ENCODE measurements at regions of chr12 and their contacts with region 1.

Region 1: DNA sequence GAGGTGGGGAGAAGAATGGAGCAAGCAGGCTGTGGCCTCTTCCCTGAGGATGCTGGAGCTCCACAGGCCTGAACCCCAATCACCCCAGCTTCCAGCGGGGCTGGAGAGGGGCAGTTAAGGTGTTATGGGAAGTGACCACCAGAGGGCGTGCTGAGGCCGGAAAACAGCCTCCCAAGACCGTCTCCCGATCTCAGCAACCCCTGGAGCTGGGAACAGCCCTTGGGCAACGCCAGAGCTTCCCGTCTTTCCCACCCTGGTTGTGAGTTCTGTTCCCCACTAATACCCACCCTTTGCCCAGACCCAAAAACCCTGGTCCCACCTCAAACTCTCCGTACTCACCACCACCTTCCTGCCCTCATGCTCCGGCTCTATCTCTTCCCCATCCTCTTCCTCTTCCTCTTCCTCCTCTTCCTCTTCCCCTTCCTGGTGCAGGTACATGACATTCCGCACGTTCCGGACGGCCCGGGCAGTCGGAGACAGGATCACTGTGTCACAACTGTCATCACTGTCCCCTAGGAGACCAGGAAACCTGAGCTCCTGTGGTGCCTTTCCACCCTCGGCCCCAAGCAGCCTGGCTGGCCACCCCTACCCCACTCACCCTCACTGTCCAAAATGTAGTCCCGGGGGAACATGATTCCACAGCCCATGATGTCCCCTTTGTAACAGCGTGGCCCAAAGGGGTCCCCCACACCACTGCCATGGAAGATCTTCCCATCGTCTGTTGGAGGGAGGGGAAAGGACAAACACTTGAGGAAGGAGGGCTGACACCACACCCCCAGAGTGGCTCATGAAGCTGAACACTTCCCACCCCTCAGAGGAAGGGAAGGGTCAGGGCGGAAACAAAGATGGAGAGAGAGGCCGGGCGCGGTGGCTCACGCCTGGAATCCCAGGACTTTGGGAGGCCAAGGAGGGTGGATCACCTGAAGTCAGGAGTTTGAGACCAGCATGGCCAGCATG is 12.9 kb downstream of the SPRYD3 start:
- DNase-seq: peak; percentile 60
- ATAC-seq: peak; percentile 73
- H3K4me3 ChIP-seq: peak overlapping the region in 1 of 2 experiments; percentile 18; a peak in 2 of 4 replicates
- H3K27ac ChIP-seq: peak overlapping the region; percentile 67
- H3K4me1 ChIP-seq: peaks cover 18 to 52% of the 10 kb centered on the region in 2 experiments
- H3K27me3 ChIP-seq: no peaks in the 10 kb centered on the region
- CTCF ChIP-seq: peak; percentile 76 to 82 (median 82)
- POLR2A ChIP-seq: no peak
- RAD21 ChIP-seq: peak; percentile 97

Region 2: GRCh38 chr12:53012928-53013327 is 53.3 kb before region 1 on chr12:
- CTCF ChIA-PET with region 1: no interaction called
- POLR2A ChIA-PET with region 1: no interaction called
- RAD21 ChIA-PET with region 1: no interaction called
- intact Hi-C with region 1: no loop called
- DNase-seq: no peak
- ATAC-seq: no peak
- H3K4me3 ChIP-seq: no peak overlapping the region
- H3K27ac ChIP-seq: no peak overlapping the region
- H3K4me1 ChIP-seq: peaks cover 6 to 24% of the 10 kb centered on the region in 2 experiments
- H3K27me3 ChIP-seq: no peaks in the 10 kb centered on the region
- CTCF ChIP-seq: no peak
- POLR2A ChIP-seq: no peak
- RAD21 ChIP-seq: no peak

Region 3: DNA sequence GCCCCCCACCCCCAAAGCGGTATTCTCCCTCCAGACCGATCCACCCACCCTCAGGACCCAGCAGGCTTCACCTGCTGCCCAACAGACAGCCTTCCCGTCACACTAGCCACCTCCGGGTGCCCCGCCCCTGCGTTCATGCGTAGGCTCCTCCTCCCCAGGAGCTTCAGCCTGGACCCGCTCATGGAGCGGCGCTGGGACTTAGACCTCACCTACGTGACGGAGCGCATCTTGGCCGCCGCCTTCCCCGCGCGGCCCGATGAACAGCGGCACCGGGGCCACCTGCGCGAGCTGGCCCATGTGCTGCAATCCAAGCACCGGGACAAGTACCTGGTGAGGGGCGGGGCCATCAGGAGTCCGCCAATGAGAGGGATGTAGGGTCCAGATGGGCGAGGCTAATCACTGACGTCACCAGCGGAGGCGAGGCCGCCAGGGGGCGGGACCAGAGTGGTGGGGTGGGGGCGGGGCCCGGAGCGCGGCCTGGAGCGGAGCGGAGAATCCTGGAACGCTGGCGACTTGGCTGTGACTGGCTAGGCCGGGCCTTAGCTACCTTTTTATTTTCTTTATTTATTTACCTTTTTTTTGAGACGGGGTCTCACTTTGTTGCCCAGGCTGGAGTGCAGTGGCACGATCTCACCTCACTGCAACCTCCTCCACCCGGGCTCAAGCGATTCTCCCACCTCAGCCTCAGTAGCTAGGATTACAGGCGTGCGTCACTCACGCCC is 12.0 kb before region 1 on chr12:
- CTCF ChIA-PET with region 1: interaction called, 36 read pairs
- POLR2A ChIA-PET with region 1: interaction called, 5 read pairs
- RAD21 ChIA-PET with region 1: interaction called, 6 to 9 read pairs
- intact Hi-C with region 1: no loop called
- DNase-seq: peak; percentile 94
- ATAC-seq: peak; percentile 81
- H3K4me3 ChIP-seq: peak overlapping the region; percentile 71 to 81
- H3K27ac ChIP-seq: peak overlapping the region; percentile 92
- H3K4me1 ChIP-seq: peaks cover 42 to 58% of the 10 kb centered on the region in 2 experiments
- H3K27me3 ChIP-seq: no peaks in the 10 kb centered on the region
- CTCF ChIP-seq: no peak
- POLR2A ChIP-seq: peak; percentile 56
- RAD21 ChIP-seq: no peak

Region 4: GRCh38 chr12:53098982-53099651 is 32.9 kb after region 1 on chr12:
- CTCF ChIA-PET with region 1: interaction called, 110 read pairs
- POLR2A ChIA-PET with region 1: interaction called, 13 read pairs
- RAD21 ChIA-PET with region 1: interaction called, 27 to 30 read pairs
- intact Hi-C with region 1: loop called (anchors 1 kb)
- DNase-seq: peak; percentile 89
- ATAC-seq: peak; percentile 71
- H3K4me3 ChIP-seq: peak overlapping the region; percentile 58 to 78
- H3K27ac ChIP-seq: peak overlapping the region; percentile 98
- H3K4me1 ChIP-seq: peaks cover 45 to 76% of the 10 kb centered on the region in 2 experiments
- H3K27me3 ChIP-seq: no peaks in the 10 kb centered on the region
- CTCF ChIP-seq: peak in 2 of 3 experiments; percentile 82 to 93; a peak in 4 of 6 replicates
- POLR2A ChIP-seq: no peak
- RAD21 ChIP-seq: no peak

Region 5: GRCh38 chr12:53180220-53180930 is 114.1 kb after region 1 on chr12 and contains the starts of genes CSAD and ZNF740:
- CTCF ChIA-PET with region 1: interaction called, 13 read pairs
- POLR2A ChIA-PET with region 1: no interaction called
- RAD21 ChIA-PET with region 1: no interaction called
- intact Hi-C with region 1: no loop called
- DNase-seq: peak; percentile 95
- ATAC-seq: peak; percentile 96
- H3K4me3 ChIP-seq: peak within 1 kb of the TSS; percentile 78 to 86
- H3K27ac ChIP-seq: peak within 1 kb of the TSS; percentile 85
- H3K4me1 ChIP-seq: peaks cover 15 to 32% of the 10 kb centered on the region in 2 experiments
- H3K27me3 ChIP-seq: no peaks in the 10 kb centered on the region
- CTCF ChIP-seq: no peak
- POLR2A ChIP-seq: no peak
- RAD21 ChIP-seq: no peak
- total RNA-seq, gene CSAD: 20.3 TPM
- total RNA-seq, gene ZNF740: 49.7 TPM

Region 6: DNA sequence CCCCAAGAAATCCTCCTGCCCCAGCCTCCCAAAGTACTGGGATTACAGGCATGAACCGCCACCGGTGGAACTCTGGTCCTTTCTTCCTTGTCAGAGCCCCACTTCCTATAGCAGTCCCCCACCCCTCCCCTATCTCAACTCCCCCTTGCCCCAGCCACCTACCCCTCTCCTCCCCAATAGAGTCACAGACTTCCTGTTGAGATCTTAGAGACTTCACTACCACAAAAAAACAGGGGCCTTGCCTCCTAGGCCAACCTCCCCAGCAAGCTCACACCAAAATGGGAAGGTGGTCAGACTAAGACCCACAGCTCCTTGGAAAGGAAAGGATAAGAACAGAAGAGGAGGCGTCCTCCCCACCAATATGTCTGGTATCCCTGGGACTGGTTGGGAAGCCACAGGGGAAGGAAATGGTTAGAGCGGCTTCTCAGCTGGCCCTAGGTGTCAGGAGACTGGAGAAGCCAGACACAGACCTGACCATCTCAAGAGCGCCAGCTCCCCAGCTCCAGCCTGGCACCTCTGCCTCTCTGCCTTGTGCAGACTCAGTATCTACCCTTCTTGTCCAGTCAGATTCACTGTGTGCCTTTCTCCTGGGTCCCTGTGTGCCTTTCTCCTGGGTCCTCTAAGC is 132.3 kb after region 1 on chr12:
- CTCF ChIA-PET with region 1: interaction called, 36 read pairs
- POLR2A ChIA-PET with region 1: interaction called, 3 read pairs
- RAD21 ChIA-PET with region 1: interaction called, 3 to 4 read pairs
- intact Hi-C with region 1: no loop called
- DNase-seq: no peak
- ATAC-seq: no peak
- H3K4me3 ChIP-seq: no peak overlapping the region
- H3K27ac ChIP-seq: no peak overlapping the region
- H3K4me1 ChIP-seq: peaks cover 3 to 26% of the 10 kb centered on the region in 2 experiments; a peak in 3 of 4 replicates
- H3K27me3 ChIP-seq: no peaks in the 10 kb centered on the region
- CTCF ChIP-seq: no peak
- POLR2A ChIP-seq: no peak
- RAD21 ChIP-seq: no peak